Activated B cell treated with CpG ODN at 0.5 μM for 24 hours (primary cell): ENCODE measurements at regions of chr1 and their contacts with region 1.

Region 1: DNA sequence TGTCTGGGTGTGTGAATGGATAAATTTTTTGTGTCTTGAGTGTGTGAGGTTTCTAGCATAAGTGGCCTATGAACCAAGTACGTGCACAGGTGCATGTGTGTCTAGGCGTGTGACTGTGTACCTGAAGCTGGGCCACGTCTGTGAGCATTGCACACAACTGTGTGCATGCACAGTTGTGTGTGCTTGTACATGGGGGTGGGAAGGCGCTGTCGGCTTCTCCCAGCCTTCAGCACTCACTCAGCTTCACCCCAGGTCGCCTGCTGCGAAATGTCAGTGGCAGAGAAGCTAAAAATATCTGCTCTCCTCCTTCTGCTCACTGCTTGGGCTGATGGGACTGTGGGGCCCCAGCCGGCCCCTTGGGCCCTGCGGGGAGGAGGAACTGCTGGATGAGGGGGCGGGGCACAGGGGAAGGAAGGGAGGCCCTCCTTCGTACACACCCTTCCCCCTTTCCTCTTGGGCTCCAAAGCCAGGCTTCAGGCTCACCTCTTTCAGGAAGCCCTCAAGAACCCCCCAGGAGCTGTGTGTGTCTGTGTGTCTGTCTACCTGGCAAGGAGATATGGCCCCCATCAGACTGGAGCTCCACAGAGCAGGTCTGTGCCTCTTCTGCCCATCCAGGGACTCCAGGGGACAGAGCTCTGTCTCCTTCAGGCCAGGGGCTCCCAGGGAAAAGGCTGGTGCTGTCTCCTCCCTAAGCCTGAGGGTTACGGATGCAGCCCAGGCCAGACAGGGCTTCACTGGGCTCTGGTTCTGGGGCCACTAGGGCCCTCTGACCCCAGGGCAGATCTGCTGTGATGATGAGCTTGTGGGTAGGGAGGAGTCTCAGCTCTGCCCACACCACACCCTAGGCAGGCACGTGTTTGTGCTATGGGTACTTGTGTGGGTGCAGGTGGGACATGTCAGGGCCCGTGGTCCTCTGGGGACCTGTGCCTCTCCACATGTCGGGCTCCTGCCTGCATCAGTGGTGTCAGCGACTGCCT is 35.6 kb upstream of the WASF2 start:
- DNase-seq: peak; percentile 51
- ATAC-seq: peak; percentile 64
- H3K4me3 Mint-ChIP-seq: peak overlapping the region; percentile 41
- H3K27ac Mint-ChIP-seq: peak overlapping the region; percentile 79
- H3K4me1 Mint-ChIP-seq: peaks cover 76% of the 10 kb centered on the region
- H3K27me3 Mint-ChIP-seq: no peaks in the 10 kb centered on the region
- CTCF ChIP-seq: no peak

Region 2: DNA sequence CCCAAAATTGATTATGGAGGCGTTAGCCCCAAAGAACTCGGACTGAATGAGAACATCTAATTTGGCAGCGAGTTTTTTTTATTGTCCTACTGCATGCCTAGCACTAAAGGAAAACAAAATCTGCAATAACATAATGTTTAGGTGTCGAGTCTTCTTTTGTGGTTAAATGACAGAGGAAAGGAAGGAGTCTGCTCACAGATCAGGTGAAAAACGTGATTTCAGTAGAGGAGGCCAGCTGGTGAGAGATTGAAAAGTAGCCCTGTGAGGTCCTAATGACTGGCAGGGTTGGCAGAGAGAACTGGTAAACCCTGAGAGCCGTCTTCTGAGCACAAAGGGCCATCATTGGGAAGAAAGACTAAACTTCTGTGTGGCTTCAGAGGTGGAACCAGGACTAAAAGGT is 267.0 kb before region 1 on chr1:
- CTCF ChIA-PET with region 1: no interaction called
- POLR2A ChIA-PET with region 1: no interaction called
- intact Hi-C with region 1: no loop called
- DNase-seq: no peak
- ATAC-seq: no peak
- H3K4me3 Mint-ChIP-seq: no peak overlapping the region
- H3K27ac Mint-ChIP-seq: peak overlapping the region; percentile 59
- H3K4me1 Mint-ChIP-seq: peaks cover 32% of the 10 kb centered on the region
- H3K27me3 Mint-ChIP-seq: no peaks in the 10 kb centered on the region
- CTCF ChIP-seq: no peak

Region 3: GRCh38 chr1:27476237-27476636 is 49.3 kb before region 1 on chr1:
- CTCF ChIA-PET with region 1: no interaction called
- POLR2A ChIA-PET with region 1: interaction called, 5 read pairs
- intact Hi-C with region 1: loop called (anchors 5 kb)
- DNase-seq: no peak
- ATAC-seq: no peak
- H3K4me3 Mint-ChIP-seq: peak overlapping the region; percentile 55
- H3K27ac Mint-ChIP-seq: peak overlapping the region; percentile 18
- H3K4me1 Mint-ChIP-seq: peaks cover 93% of the 10 kb centered on the region
- H3K27me3 Mint-ChIP-seq: no peaks in the 10 kb centered on the region
- CTCF ChIP-seq: no peak

Region 4: GRCh38 chr1:27568300-27569087 is 42.9 kb after region 1 on chr1:
- CTCF ChIA-PET with region 1: interaction called, 3 read pairs
- POLR2A ChIA-PET with region 1: interaction called, 3 read pairs
- intact Hi-C with region 1: loop called (anchors 1 kb)
- DNase-seq: peak; percentile 94
- ATAC-seq: peak; percentile 91
- H3K4me3 Mint-ChIP-seq: peak overlapping the region; percentile 73
- H3K27ac Mint-ChIP-seq: no peak overlapping the region
- H3K4me1 Mint-ChIP-seq: peaks cover 33% of the 10 kb centered on the region
- H3K27me3 Mint-ChIP-seq: no peaks in the 10 kb centered on the region
- CTCF ChIP-seq: no peak